Right lobe of liver (tissue), 6 donors: ENCODE measurements at regions of chr3 and their contacts with region 1.

Region 1: GRCh38 chr3:48399387-48400172 is 27.6 kb downstream of the FBXW12 start:
- DNase-seq: peak in 1 of 3 donors; percentile 48
- ATAC-seq: peak in 3 of 4 donors; percentile 6 to 15 (median 12)
- H3K4me3 ChIP-seq: no peak overlapping the region
- H3K27ac ChIP-seq: no peak overlapping the region
- H3K4me1 ChIP-seq: no peaks in the 10 kb centered on the region
- H3K27me3 ChIP-seq: no peaks in the 10 kb centered on the region
- CTCF ChIP-seq: no peak
- POLR2A ChIP-seq: no peak

Region 2: GRCh38 chr3:48439820-48440589 is 40.4 kb after region 1 on chr3 and contains the starts of genes CCDC51 and TMA7:
- intact Hi-C with region 1: loop called (anchors 5 kb)
- DNase-seq: peak; percentile 99
- ATAC-seq: peak; percentile 95 to 97 (median 96)
- H3K4me3 ChIP-seq: peak within 1 kb of the TSS; percentile 72 to 86 (median 75)
- H3K27ac ChIP-seq: peak within 1 kb of the TSS; percentile 78 to 83 (median 78)
- H3K4me1 ChIP-seq: peaks cover 0 to 18% (median 4%) of the 10 kb centered on the region in 4 donors
- H3K27me3 ChIP-seq: no peaks in the 10 kb centered on the region
- CTCF ChIP-seq: no peak
- POLR2A ChIP-seq: peak; percentile 90
- total RNA-seq, gene CCDC51: 5.9 to 16.0 (median 8.1) TPM
- total RNA-seq, gene TMA7: 64.8 to 182 (median 80.1) TPM

Region 3: GRCh38 chr3:48556793-48557626 is 157.4 kb after region 1 on chr3 and contains the start of gene PFKFB4:
- intact Hi-C with region 1: loop called in 1 of 2 experiments (anchors 10 kb)
- DNase-seq: peak; percentile 99 to 100 (median 99)
- ATAC-seq: peak; percentile 87 to 95 (median 92)
- H3K4me3 ChIP-seq: peak within 1 kb of the TSS; percentile 41 to 54 (median 52)
- H3K27ac ChIP-seq: peak within 1 kb of the TSS in 2 of 3 donors; percentile 7 to 38
- H3K4me1 ChIP-seq: peaks cover 0 to 11% (median 5%) of the 10 kb centered on the region in 4 donors
- H3K27me3 ChIP-seq: no peaks in the 10 kb centered on the region
- CTCF ChIP-seq: peak in 3 of 4 donors; percentile 7 to 24 (median 10)
- POLR2A ChIP-seq: no peak
- total RNA-seq, gene PFKFB4: 0.59 to 10.8 (median 1.4) TPM